ENCODE measurements at regions of chr2 and their contacts with region 1.

Region 1: DNA sequence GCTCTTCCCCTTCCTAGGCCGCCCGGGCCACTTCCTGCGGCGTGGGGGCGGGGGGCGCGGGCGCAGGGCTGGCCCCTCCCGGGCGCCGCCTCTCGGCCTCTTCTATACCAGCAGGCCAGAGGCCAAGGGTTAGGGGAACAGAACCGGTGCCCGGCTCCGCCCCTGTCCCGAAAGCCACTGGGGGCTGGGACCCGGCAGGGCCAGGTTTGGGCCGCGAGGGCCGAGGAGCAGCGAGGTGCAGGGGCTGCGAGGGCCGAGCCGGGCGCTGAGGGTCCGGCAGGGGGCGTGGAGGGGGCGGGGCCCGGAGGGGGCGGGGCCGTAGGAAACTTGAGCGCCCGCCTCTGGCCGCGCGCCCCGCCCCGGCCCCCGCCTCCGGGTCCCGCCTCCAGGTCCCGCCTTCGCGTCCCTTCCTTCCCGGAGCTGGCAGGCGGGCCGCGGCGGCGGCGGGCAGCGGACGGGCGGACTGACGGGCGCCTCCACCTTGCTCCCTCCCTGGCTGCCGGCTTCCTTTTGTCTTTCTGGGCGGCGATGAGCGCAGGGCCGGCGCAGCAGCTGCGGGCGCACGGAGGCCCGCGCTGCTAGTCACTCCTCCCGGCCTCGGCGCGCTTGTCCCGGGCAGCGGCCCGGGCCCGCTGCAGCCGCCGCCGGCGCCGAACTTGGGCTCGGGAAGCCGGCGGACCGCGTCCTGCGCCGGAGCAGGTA is at the start of gene HPCAL1:
- DNase-seq: peak; percentile 69 to 90 (median 84)
- ATAC-seq: peak; percentile 85
- H3K4me3 ChIP-seq: peak within 1 kb of the TSS; percentile 72
- H3K4me3 Mint-ChIP-seq: peak within 1 kb of the TSS; percentile 89 to 100 (median 99)
- H3K27ac ChIP-seq: peak within 1 kb of the TSS; percentile 78
- H3K27ac Mint-ChIP-seq: peak within 1 kb of the TSS; percentile 85 to 97 (median 94)
- H3K4me1 ChIP-seq: peaks cover 42 to 62% of the 10 kb centered on the region in 2 donors
- H3K4me1 Mint-ChIP-seq: peaks cover 46 to 77% (median 66%) of the 10 kb centered on the region in 7 donors
- H3K27me3 ChIP-seq: no peaks in the 10 kb centered on the region
- H3K27me3 Mint-ChIP-seq: no peaks in the 10 kb centered on the region
- total RNA-seq, gene HPCAL1: 44.9 to 90.5 (median 65.8) TPM

Region 2: GRCh38 chr2:9201185-9201891 is 1101.3 kb before region 1 on chr2:
- CTCF ChIA-PET with region 1: no interaction called
- POLR2A ChIA-PET with region 1: no interaction called
- intact Hi-C with region 1: no loop called
- DNase-seq: no peak
- ATAC-seq: no peak
- H3K4me3 ChIP-seq: no peak overlapping the region
- H3K4me3 Mint-ChIP-seq: no peak overlapping the region
- H3K27ac ChIP-seq: no peak overlapping the region
- H3K27ac Mint-ChIP-seq: no peak overlapping the region
- H3K4me1 ChIP-seq: no peaks in the 10 kb centered on the region
- H3K4me1 Mint-ChIP-seq: peaks cover 0 to 6% (median 0%) of the 10 kb centered on the region in 7 donors
- H3K27me3 ChIP-seq: peaks cover 0 to 9% of the 10 kb centered on the region in 2 donors
- H3K27me3 Mint-ChIP-seq: peaks cover 54 to 69% (median 59%) of the 10 kb centered on the region in 5 donors

Region 3: GRCh38 chr2:9843229-9844035 is 459.2 kb before region 1 on chr2 and contains the start of gene TAF1B:
- CTCF ChIA-PET with region 1: no interaction called
- POLR2A ChIA-PET with region 1: interaction called, 3 read pairs
- intact Hi-C with region 1: loop called (anchors 10 kb)
- DNase-seq: peak; percentile 55 to 89 (median 80)
- ATAC-seq: peak; percentile 87
- H3K4me3 ChIP-seq: peak within 1 kb of the TSS; percentile 85
- H3K4me3 Mint-ChIP-seq: peak within 1 kb of the TSS; percentile 89 to 95 (median 93)
- H3K27ac ChIP-seq: peak within 1 kb of the TSS; percentile 72
- H3K27ac Mint-ChIP-seq: peak within 1 kb of the TSS; percentile 74 to 97 (median 92)
- H3K4me1 ChIP-seq: peaks cover 11 to 13% of the 10 kb centered on the region in 2 donors
- H3K4me1 Mint-ChIP-seq: peaks cover 25 to 56% (median 48%) of the 10 kb centered on the region in 7 donors
- H3K27me3 ChIP-seq: no peaks in the 10 kb centered on the region
- H3K27me3 Mint-ChIP-seq: peaks cover 0 to 6% (median 0%) of the 10 kb centered on the region in 5 donors
- total RNA-seq, gene TAF1B: 9.2 to 28.2 (median 20.9) TPM

Region 4: GRCh38 chr2:10122386-10123280 is 180.0 kb before region 1 on chr2 and contains the start of gene RRM2:
- CTCF ChIA-PET with region 1: interaction called, 3 read pairs
- POLR2A ChIA-PET with region 1: interaction called, 4 read pairs
- intact Hi-C with region 1: loop called (anchors 1 kb)
- DNase-seq: peak; percentile 74 to 94 (median 84)
- ATAC-seq: peak; percentile 82
- H3K4me3 ChIP-seq: peak within 1 kb of the TSS; percentile 55
- H3K4me3 Mint-ChIP-seq: peak within 1 kb of the TSS; percentile 80 to 99 (median 98)
- H3K27ac ChIP-seq: peak within 1 kb of the TSS; percentile 34
- H3K27ac Mint-ChIP-seq: peak within 1 kb of the TSS in 6 of 9 donors; percentile 17 to 99 (median 69)
- H3K4me1 ChIP-seq: peaks cover 24 to 29% of the 10 kb centered on the region in 2 donors
- H3K4me1 Mint-ChIP-seq: peaks cover 21 to 76% (median 41%) of the 10 kb centered on the region in 7 donors
- H3K27me3 ChIP-seq: peaks cover 0 to 7% of the 10 kb centered on the region in 2 donors
- H3K27me3 Mint-ChIP-seq: peaks cover 0 to 24% (median 10%) of the 10 kb centered on the region in 5 donors
- total RNA-seq, gene RRM2: 0.13 to 330 (median 0.51) TPM

Region 5: GRCh38 chr2:10331027-10331701 is 28.5 kb after region 1 on chr2:
- CTCF ChIA-PET with region 1: interaction called, 93 read pairs
- POLR2A ChIA-PET with region 1: interaction called, 150 read pairs
- intact Hi-C with region 1: loop called (anchors 1 kb)
- DNase-seq: peak; percentile 41 to 79 (median 70)
- ATAC-seq: peak; percentile 58
- H3K4me3 ChIP-seq: peak overlapping the region; percentile 80
- H3K4me3 Mint-ChIP-seq: peak overlapping the region; percentile 85 to 97 (median 94)
- H3K27ac ChIP-seq: peak overlapping the region; percentile 82
- H3K27ac Mint-ChIP-seq: peak overlapping the region; percentile 92 to 99 (median 98)
- H3K4me1 ChIP-seq: peaks cover 32 to 65% of the 10 kb centered on the region in 2 donors
- H3K4me1 Mint-ChIP-seq: peaks cover 58 to 96% (median 93%) of the 10 kb centered on the region in 7 donors
- H3K27me3 ChIP-seq: no peaks in the 10 kb centered on the region
- H3K27me3 Mint-ChIP-seq: no peaks in the 10 kb centered on the region

Region 6: GRCh38 chr2:10408649-10409579 is 106.3 kb after region 1 on chr2:
- CTCF ChIA-PET with region 1: interaction called, 93 read pairs
- POLR2A ChIA-PET with region 1: interaction called, 65 read pairs
- intact Hi-C with region 1: loop called (anchors 1 kb)
- DNase-seq: peak; percentile 65 to 85 (median 80)
- ATAC-seq: peak; percentile 91
- H3K4me3 ChIP-seq: peak overlapping the region; percentile 35
- H3K4me3 Mint-ChIP-seq: peak overlapping the region; percentile 64 to 89 (median 78)
- H3K27ac ChIP-seq: peak overlapping the region; percentile 33
- H3K27ac Mint-ChIP-seq: peak overlapping the region; percentile 66 to 96 (median 86)
- H3K4me1 ChIP-seq: peaks cover 29 to 39% of the 10 kb centered on the region in 2 donors
- H3K4me1 Mint-ChIP-seq: peaks cover 29 to 52% (median 41%) of the 10 kb centered on the region in 7 donors
- H3K27me3 ChIP-seq: no peaks in the 10 kb centered on the region
- H3K27me3 Mint-ChIP-seq: no peaks in the 10 kb centered on the region

Region 7: DNA sequence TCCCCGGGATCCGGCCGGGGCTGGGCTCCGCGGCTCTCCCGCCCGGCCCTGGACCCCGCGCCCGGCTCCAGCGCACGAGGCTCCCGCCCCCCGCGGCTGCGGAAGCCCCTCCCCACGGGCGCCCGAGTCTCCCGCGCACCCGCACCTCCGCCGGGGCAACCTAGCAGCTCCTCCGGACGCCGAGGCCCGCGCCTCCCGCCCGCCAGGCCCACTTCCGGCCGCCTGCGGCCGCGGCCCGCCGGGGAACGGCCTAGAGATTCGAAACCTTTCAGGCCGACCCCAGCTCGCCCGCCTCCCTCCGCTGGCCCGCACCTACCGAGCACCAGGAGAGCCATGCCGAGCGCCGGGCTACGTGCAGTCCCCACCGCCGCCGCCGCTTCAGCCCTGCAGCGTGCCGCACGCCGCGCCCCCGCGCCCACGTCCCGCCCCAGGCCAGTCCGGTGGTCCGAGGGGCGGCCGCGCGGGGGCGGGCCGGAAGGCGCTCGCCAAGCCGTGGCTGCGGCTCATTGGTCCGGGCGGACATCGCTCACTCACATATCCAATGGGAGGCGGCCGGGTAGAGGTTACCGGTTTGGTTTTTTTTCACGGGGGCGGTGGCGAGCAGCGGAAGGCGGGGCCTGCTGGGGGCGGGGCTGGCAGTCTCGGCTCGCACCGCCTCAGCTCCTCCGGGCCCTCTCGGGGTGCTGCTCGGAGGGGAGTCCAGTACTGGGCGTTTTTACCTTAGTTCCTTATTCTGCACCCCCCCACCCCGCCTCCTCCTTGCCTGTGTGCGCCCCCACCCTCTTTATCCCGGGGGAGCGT is 509.9 kb after region 1 on chr2 and contains the start of gene PDIA6:
- CTCF ChIA-PET with region 1: no interaction called
- POLR2A ChIA-PET with region 1: no interaction called
- intact Hi-C with region 1: loop called in 1 of 2 experiments (anchors 2 kb)
- DNase-seq: peak; percentile 87 to 96 (median 90)
- ATAC-seq: peak; percentile 95
- H3K4me3 ChIP-seq: peak within 1 kb of the TSS; percentile 73
- H3K4me3 Mint-ChIP-seq: peak within 1 kb of the TSS; percentile 87 to 95 (median 91)
- H3K27ac ChIP-seq: peak within 1 kb of the TSS; percentile 86
- H3K27ac Mint-ChIP-seq: peak within 1 kb of the TSS; percentile 77 to 96 (median 84)
- H3K4me1 ChIP-seq: peaks cover 14 to 15% of the 10 kb centered on the region in 2 donors
- H3K4me1 Mint-ChIP-seq: peaks cover 28 to 44% (median 39%) of the 10 kb centered on the region in 7 donors
- H3K27me3 ChIP-seq: no peaks in the 10 kb centered on the region
- H3K27me3 Mint-ChIP-seq: peaks cover 0 to 15% (median 0%) of the 10 kb centered on the region in 5 donors
- total RNA-seq, gene PDIA6: 24.3 to 173 (median 46.8) TPM

Measured in naive thymus-derived CD4-positive, alpha-beta T cell (primary cell).